CD8-positive, alpha-beta memory T cell (primary cell): ENCODE measurements at regions of chr2 and their contacts with region 1.

Region 1: DNA sequence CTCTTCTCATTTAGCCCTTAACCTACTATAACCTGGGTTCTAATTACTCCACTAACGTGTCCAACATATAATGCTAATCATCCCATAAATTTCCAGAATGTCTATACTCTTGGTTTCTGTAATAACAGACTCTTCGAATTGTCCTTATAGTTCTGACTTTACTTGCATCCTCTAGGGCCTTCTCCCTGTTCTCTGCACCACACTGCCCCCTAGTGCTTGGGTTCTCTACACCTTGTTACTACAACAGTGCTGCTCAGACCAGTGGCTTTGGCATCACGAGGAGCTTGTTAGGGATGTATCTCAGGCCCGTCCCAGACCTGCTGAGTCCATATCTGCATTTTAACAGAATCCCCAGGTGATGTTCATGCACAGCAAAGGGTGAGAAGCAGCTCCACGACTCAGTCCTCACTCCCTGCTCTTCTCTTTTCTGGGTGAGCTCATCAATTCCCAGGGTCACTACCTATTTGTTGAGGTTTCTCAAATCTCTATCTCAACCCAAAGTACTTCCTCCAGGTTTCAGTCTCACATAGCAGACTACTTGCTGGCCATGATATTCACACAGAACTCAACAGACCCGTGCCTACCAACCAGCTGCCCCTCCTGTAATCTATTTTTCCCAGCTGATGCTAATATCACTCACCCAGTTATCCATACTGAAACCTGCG is 14.5 kb upstream of the DDX1 start:
- DNase-seq: peak; percentile 64 to 88 (median 76)
- H3K4me3 ChIP-seq: no peak overlapping the region
- H3K4me3 Mint-ChIP-seq: no peak overlapping the region
- H3K27ac ChIP-seq: no peak overlapping the region
- H3K27ac Mint-ChIP-seq: no peak overlapping the region
- H3K4me1 ChIP-seq: no peaks in the 10 kb centered on the region
- H3K4me1 Mint-ChIP-seq: no peaks in the 10 kb centered on the region
- H3K27me3 ChIP-seq: no peaks in the 10 kb centered on the region
- H3K27me3 Mint-ChIP-seq: peaks cover 0 to 6% of the 10 kb centered on the region in 2 donors

Region 2: GRCh38 chr2:15588329-15588919 is 11.2 kb after region 1 on chr2:
- CTCF ChIA-PET with region 1: interaction called, 16 read pairs
- POLR2A ChIA-PET with region 1: no interaction called
- DNase-seq: no peak
- H3K4me3 ChIP-seq: no peak overlapping the region
- H3K4me3 Mint-ChIP-seq: peak overlapping the region in 1 of 7 donors; percentile 67
- H3K27ac ChIP-seq: no peak overlapping the region
- H3K27ac Mint-ChIP-seq: peak overlapping the region in 1 of 8 donors; percentile 29
- H3K4me1 ChIP-seq: peaks cover 20% of the 10 kb centered on the region
- H3K4me1 Mint-ChIP-seq: peaks cover 22 to 31% (median 23%) of the 10 kb centered on the region in 3 donors
- H3K27me3 ChIP-seq: no peaks in the 10 kb centered on the region
- H3K27me3 Mint-ChIP-seq: peaks cover 0 to 3% of the 10 kb centered on the region in 2 donors

Region 3: DNA sequence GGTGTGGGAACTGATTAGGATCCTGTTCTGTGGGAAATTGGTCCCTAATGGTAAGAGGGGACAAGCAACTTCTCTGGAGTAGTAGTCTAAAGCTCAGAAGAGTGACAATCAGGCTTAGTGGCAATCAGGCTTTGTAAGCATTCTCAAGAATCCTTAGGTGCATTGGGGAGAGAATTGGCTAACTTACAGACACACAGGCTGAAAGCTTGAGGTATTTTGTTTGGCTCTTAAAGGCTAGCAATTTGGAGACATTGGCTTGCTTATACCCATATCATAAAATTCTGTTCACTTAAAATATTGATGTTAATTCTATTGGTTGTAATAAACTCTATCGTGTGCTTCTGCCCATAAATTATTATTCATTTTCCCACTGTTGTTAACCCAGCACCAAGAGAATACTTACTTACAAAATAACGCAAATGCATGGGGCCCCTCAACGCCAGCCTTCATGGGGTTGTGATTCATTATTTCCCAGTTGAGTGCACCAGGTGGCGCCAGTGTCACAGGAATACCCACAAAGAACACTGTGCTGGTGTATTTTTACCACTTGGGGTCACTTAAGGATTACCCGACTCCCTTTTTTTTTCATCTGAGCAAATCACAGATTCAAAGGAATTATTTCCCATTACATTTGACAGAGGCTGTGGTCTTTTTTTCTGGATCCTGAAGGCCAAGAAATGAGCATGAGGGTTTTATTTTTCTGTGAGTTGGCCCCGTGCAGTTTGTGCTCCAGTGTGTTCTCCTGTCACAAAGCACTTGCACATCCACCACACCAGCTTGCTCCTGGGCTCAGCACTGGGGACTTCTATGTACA is 60.0 kb after region 1 on chr2:
- CTCF ChIA-PET with region 1: no interaction called
- POLR2A ChIA-PET with region 1: no interaction called
- DNase-seq: peak; percentile 19 to 57 (median 23)
- H3K4me3 ChIP-seq: no peak overlapping the region
- H3K4me3 Mint-ChIP-seq: no peak overlapping the region
- H3K27ac ChIP-seq: no peak overlapping the region
- H3K27ac Mint-ChIP-seq: peak overlapping the region in 3 of 8 donors; percentile 13 to 47 (median 23)
- H3K4me1 ChIP-seq: no peaks in the 10 kb centered on the region
- H3K4me1 Mint-ChIP-seq: peaks cover 0 to 9% (median 2%) of the 10 kb centered on the region in 3 donors
- H3K27me3 ChIP-seq: no peaks in the 10 kb centered on the region
- H3K27me3 Mint-ChIP-seq: no peaks in the 10 kb centered on the region

Region 4: GRCh38 chr2:15704086-15704787 is 127.0 kb after region 1 on chr2:
- CTCF ChIA-PET with region 1: no interaction called
- POLR2A ChIA-PET with region 1: no interaction called
- DNase-seq: no peak
- H3K4me3 ChIP-seq: no peak overlapping the region
- H3K4me3 Mint-ChIP-seq: no peak overlapping the region
- H3K27ac ChIP-seq: no peak overlapping the region
- H3K27ac Mint-ChIP-seq: no peak overlapping the region
- H3K4me1 ChIP-seq: no peaks in the 10 kb centered on the region
- H3K4me1 Mint-ChIP-seq: no peaks in the 10 kb centered on the region
- H3K27me3 ChIP-seq: peaks cover 5% of the 10 kb centered on the region
- H3K27me3 Mint-ChIP-seq: peaks cover 0 to 4% of the 10 kb centered on the region in 2 donors